ENCODE measurements at regions of chr6 and their contacts with region 1.

Region 1: GRCh38 chr6:6742535-6742934 is 154.0 kb downstream of the LY86 start:
- DNase-seq: no peak
- ATAC-seq: no peak
- H3K4me3 ChIP-seq: no peak overlapping the region
- H3K27ac ChIP-seq: peak overlapping the region in 4 of 12 donors; percentile 7 to 92 (median 74)
- H3K4me1 ChIP-seq: peaks cover 0 to 42% (median 5%) of the 10 kb centered on the region in 12 donors
- H3K27me3 ChIP-seq: no peaks in the 10 kb centered on the region
- CTCF ChIP-seq: no peak
- POLR2A ChIP-seq: no peak

Region 2: DNA sequence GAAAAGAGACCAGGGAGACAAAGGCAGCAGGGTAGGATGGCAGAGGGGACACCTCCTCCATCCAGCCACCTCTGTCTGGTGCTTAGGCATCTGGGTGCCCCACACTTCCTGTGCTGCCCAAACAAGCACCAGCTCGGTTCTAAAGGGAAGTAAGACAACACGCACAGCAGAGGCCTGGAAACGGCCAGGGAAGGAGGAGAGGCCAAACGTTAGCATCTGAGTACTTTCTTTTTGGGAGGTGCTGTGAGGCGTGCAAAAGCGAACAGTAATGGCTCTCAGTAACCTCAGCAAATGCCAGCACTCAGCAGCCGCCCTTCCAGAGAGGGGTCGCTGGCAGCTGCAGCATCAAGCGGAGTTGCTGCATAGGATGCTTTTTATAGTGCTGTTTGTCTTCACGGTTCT is 29.5 kb before region 1 on chr6:
- intact Hi-C with region 1: loop called in 1 of 10 experiments (anchors 1 kb)
- DNase-seq: no peak
- ATAC-seq: peak; percentile 24 to 47 (median 34)
- H3K4me3 ChIP-seq: peak overlapping the region in 1 of 12 donors; percentile 4
- H3K27ac ChIP-seq: peak overlapping the region in 2 of 12 donors; percentile 58 to 75
- H3K4me1 ChIP-seq: peaks cover 0 to 51% (median 27%) of the 10 kb centered on the region in 12 donors
- H3K27me3 ChIP-seq: no peaks in the 10 kb centered on the region
- CTCF ChIP-seq: no peak
- POLR2A ChIP-seq: no peak

Region 3: DNA sequence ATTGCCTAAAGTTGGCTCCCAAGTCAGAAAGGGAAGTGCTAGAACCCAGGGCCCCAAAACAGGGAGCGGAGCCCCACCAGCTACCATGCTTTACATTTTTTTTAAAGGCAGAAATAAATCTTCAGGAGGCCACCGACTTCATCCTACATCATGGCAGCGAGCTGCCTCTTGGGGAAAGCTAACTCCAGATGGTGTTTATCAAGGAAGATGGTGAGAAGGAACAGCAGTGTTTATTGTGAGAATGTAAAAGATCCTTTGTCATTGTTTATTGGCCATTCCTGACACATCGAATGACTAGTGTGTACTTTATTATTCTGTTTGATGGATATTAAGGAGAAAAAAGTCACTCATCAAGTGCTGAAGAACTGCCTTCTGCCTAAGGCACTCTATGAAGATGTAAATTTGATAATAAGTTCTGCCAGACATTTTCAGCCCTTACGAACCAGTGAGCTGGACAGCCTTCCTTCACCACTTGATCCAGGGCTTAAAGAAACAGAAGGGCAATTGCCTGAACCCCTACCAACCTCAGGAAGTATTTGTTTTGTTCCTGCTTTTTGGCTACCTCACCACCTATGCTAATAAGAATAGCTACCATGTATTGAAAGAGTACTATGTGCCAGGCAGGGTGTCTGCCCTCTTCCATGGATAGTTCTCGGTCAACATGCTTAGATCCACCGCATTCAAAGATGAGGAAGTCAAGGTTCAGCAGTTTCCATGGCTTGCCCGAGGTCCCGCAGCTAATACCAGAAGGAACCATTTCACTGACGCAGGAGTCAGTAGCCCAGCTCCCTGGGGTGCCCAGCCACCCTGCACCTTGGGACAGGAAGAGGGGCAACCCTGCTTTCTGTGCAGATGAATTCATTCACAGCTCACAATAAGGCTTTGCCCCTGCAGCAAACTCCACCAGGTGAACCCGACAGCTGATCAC is 170.5 kb after region 1 on chr6:
- intact Hi-C with region 1: no loop called
- DNase-seq: no peak
- ATAC-seq: no peak
- H3K4me3 ChIP-seq: no peak overlapping the region
- H3K27ac ChIP-seq: peak overlapping the region in 1 of 12 donors; percentile 1
- H3K4me1 ChIP-seq: peaks cover 0 to 28% (median 17%) of the 10 kb centered on the region in 12 donors
- H3K27me3 ChIP-seq: no peaks in the 10 kb centered on the region
- CTCF ChIP-seq: no peak
- POLR2A ChIP-seq: no peak

Region 4: GRCh38 chr6:6942831-6943230 is 200.3 kb after region 1 on chr6:
- intact Hi-C with region 1: no loop called
- DNase-seq: peak; percentile 61 to 82 (median 74)
- ATAC-seq: peak; percentile 93 to 99 (median 98)
- H3K4me3 ChIP-seq: peak overlapping the region in 7 of 12 donors; percentile 1 to 36 (median 16)
- H3K27ac ChIP-seq: peak overlapping the region in 5 of 12 donors; percentile 19 to 60 (median 37)
- H3K4me1 ChIP-seq: peaks cover 0 to 10% (median 3%) of the 10 kb centered on the region in 12 donors
- H3K27me3 ChIP-seq: no peaks in the 10 kb centered on the region
- CTCF ChIP-seq: no peak
- POLR2A ChIP-seq: no peak

Region 5: DNA sequence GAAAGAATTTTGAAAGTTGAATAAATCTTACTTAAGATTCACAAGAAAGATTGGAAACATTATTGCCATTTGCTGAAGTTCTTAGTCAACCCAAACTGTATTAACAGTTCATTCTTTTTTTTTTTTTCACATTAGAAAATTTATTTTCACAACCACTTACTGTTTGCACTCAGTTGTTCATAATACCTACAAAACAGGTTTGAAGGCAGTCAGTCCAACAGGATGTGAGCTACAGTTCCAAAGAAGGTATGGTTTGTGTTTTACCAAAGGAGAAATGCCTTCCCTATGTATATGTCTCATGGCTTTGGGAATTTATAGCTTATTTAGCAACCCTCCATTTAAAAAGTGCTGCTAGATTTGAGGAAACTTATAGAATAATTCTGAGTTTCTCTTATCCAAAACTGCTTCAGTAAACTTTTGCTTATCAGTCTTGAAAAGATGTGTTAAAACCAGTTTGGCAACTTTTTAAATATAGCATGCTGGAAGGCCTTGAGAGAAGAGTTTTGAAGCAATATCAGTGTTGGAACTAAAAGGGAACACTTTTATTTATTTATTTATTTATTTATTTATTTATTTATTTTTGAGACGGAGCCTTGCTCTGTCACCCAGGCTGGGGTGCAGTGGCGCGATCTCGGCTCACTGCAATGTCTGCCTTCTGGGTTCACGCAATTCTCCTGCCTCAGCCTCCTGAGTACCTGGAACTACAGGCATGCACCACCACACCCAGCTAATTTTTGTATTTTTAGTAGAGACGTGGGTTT is 318.4 kb after region 1 on chr6:
- intact Hi-C with region 1: no loop called
- DNase-seq: no peak
- ATAC-seq: no peak
- H3K4me3 ChIP-seq: no peak overlapping the region
- H3K27ac ChIP-seq: no peak overlapping the region
- H3K4me1 ChIP-seq: peaks cover 0 to 7% (median 0%) of the 10 kb centered on the region in 12 donors
- H3K27me3 ChIP-seq: no peaks in the 10 kb centered on the region
- CTCF ChIP-seq: no peak
- POLR2A ChIP-seq: no peak